ENCODE measurements at regions of chr16 and their contacts with region 1.

Region 1: GRCh38 chr16:3400779-3401688 is at the starts of genes ZNF174 and ZSCAN32:
- DNase-seq: peak; percentile 96
- ATAC-seq: peak; percentile 98
- H3K4me3 Mint-ChIP-seq: peak within 1 kb of the TSS; percentile 87
- H3K27ac Mint-ChIP-seq: peak within 1 kb of the TSS; percentile 76
- H3K4me1 Mint-ChIP-seq: peaks cover 45% of the 10 kb centered on the region
- H3K27me3 Mint-ChIP-seq: no peaks in the 10 kb centered on the region
- CTCF ChIP-seq: no peak
- total RNA-seq, gene ZNF174: 9.0 and 10.4 TPM in 2 replicates
- total RNA-seq, gene ZSCAN32: 21.6 and 21.7 TPM in 2 replicates

Region 2: DNA sequence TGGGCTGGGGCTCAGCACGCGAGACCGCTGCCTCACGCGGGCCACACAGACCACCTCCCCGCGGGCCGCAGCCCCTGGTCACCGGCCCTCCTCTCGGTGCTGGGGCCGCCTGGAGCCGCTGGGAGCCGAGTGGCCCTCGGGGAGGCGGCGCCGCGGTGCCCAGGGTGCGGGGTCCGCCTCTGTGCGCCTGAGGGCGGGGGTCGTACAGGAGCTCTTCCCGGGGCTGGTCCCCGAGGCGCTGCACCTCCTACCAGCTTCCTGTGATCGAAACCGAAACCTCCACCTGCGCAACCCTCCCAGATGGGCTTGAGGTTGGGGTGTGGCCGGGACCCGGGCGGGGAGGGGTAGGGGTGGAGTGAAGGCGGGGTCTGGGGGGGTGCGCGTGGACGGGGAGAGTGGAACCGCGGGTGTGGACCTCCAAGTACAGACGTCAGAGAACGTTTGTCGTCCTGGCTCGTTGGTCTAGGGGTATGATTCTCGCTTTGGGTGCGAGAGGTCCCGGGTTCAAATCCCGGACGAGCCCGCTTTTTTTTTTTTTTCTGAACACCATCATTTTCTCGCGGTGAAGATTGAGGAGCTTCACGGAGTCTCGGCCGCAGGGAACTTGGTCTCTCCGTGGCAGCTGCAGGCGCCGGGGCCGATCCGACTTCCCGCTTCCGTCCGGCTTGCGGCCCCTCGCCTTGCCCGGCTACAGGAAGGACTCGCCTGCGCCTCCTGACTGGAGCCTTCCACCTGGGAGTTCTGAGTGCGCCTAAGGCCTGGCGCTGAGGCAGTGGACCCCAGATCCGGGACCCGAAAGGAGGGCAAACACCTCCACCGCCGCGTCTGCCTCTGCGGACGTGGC is 242.3 kb before region 1 on chr16:
- CTCF ChIA-PET with region 1: no interaction called
- POLR2A ChIA-PET with region 1: interaction called, 8 read pairs
- intact Hi-C with region 1: loop called (anchors 2 kb)
- DNase-seq: peak; percentile 77
- ATAC-seq: peak; percentile 90
- H3K4me3 Mint-ChIP-seq: peak overlapping the region; percentile 91
- H3K27ac Mint-ChIP-seq: peak overlapping the region; percentile 90
- H3K4me1 Mint-ChIP-seq: peaks cover 23% of the 10 kb centered on the region
- H3K27me3 Mint-ChIP-seq: peaks cover 3% of the 10 kb centered on the region
- CTCF ChIP-seq: no peak

Region 3: DNA sequence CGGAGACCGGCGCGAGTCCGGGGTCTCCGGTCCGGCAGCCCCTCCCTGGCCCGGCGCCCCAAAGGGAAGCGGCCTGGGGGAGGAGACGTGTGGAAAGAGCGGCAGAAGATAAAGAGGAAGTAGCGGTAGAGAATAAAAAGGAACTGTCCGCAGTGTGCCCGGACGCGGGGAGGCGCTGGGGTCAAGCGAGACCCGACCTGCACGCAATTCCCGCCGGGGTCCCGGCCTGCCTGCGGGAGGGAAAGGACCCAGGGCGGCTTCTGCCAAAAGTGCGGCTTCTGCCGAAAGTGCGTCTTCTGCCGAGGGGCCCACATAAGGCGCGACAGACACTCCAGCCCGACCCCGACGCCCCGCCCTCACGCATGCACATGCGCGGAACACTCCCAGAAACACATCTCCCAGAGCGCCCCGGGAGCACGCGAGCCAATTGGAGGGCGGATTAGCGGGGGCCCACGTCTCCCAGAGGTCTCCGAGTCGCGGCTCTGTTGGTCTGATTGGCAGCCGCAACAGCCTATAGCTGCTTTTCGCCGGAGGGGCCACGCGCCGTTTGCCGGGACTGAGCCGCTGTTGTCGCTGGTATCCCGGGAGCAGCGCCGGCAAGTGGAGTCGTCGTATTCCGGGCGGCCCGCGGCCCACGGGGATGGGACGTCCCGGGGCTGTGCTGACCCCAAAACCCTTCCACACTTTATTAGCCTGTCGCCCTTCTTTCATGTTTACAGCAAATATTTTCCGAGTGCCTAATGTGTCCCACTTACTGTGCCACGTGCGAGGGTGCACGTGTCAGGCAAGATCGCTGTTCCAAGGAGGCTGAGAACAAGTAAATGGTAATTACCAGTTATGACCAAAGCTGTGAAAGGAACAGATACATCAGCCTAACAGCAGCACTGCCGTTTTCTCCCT is 136.6 kb before region 1 on chr16:
- CTCF ChIA-PET with region 1: no interaction called
- POLR2A ChIA-PET with region 1: interaction called, 17 read pairs
- intact Hi-C with region 1: no loop called
- DNase-seq: peak; percentile 95
- ATAC-seq: peak; percentile 89
- H3K4me3 Mint-ChIP-seq: peak overlapping the region; percentile 89
- H3K27ac Mint-ChIP-seq: peak overlapping the region; percentile 95
- H3K4me1 Mint-ChIP-seq: peaks cover 27% of the 10 kb centered on the region
- H3K27me3 Mint-ChIP-seq: no peaks in the 10 kb centered on the region
- CTCF ChIP-seq: no peak

Region 4: GRCh38 chr16:3364774-3365427 is 36.1 kb before region 1 on chr16:
- CTCF ChIA-PET with region 1: no interaction called
- POLR2A ChIA-PET with region 1: interaction called, 14 read pairs
- intact Hi-C with region 1: loop called (anchors 2 kb)
- DNase-seq: peak; percentile 65
- ATAC-seq: peak; percentile 95
- H3K4me3 Mint-ChIP-seq: peak overlapping the region; percentile 82
- H3K27ac Mint-ChIP-seq: peak overlapping the region; percentile 84
- H3K4me1 Mint-ChIP-seq: peaks cover 12% of the 10 kb centered on the region
- H3K27me3 Mint-ChIP-seq: peaks cover 9% of the 10 kb centered on the region
- CTCF ChIP-seq: no peak

Region 5: DNA sequence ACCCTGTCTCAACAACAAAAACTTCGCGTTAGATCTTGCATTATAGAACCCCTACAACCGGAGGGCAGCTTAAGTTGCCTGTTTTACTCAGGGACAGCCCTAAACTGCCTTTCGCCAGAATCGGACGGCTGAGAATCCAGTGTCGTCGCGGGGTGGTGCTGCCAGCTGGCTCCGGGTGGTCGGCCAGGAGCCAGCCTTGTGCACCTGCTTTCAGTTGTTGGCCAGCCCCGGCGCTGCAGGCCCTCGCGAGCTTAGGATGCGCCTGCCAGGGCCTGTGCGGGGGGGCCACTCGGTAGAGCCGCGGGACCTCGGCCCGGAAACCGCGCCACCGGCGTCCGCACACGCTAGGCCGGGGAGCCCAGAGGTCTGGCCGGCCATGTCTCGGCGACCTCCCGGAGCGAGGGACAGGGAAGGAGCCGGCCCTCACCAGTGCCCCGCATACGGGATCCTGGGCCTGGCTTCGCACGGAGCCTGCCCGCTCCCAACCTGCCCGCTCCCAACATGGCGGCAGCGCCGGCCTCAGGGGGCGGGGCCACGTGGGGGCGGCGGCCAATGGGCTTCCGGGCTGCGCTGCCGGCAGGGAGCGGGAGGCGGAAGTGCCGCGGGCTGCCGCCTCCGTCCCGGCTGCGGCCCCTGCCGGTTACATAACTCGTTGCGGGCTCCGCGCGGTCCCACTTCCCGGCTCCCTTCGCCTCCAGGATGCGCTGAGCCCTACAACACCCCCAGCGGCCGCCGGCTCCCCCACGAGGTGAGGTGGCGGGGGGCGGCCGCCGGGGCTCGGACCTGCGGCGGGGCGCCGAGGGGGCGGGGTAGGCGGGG is 56.6 kb after region 1 on chr16:
- CTCF ChIA-PET with region 1: interaction called, 6 read pairs
- POLR2A ChIA-PET with region 1: interaction called, 18 read pairs
- intact Hi-C with region 1: loop called (anchors 1 kb)
- DNase-seq: peak; percentile 91
- ATAC-seq: peak; percentile 90
- H3K4me3 Mint-ChIP-seq: peak overlapping the region; percentile 82
- H3K27ac Mint-ChIP-seq: peak overlapping the region; percentile 85
- H3K4me1 Mint-ChIP-seq: peaks cover 44% of the 10 kb centered on the region
- H3K27me3 Mint-ChIP-seq: no peaks in the 10 kb centered on the region
- CTCF ChIP-seq: no peak

Region 6: GRCh38 chr16:3964686-3965290 is 563.8 kb after region 1 on chr16:
- CTCF ChIA-PET with region 1: no interaction called
- POLR2A ChIA-PET with region 1: interaction called, 15 read pairs
- intact Hi-C with region 1: no loop called
- DNase-seq: no peak
- ATAC-seq: no peak
- H3K4me3 Mint-ChIP-seq: no peak overlapping the region
- H3K27ac Mint-ChIP-seq: no peak overlapping the region
- H3K4me1 Mint-ChIP-seq: peaks cover 15% of the 10 kb centered on the region
- H3K27me3 Mint-ChIP-seq: peaks cover 5% of the 10 kb centered on the region
- CTCF ChIP-seq: no peak